OCI-LY7 (cell line): ENCODE measurements at regions of chr6 and their contacts with region 1.

Region 1: GRCh38 chr6:130447374-130447773 is 81.6 kb downstream of the TMEM200A start:
- DNase-seq: no peak
- H3K4me3 ChIP-seq: no peak overlapping the region
- H3K27ac ChIP-seq: no peak overlapping the region
- H3K4me1 ChIP-seq: no peaks in the 10 kb centered on the region
- CTCF ChIP-seq: no peak

Region 2: DNA sequence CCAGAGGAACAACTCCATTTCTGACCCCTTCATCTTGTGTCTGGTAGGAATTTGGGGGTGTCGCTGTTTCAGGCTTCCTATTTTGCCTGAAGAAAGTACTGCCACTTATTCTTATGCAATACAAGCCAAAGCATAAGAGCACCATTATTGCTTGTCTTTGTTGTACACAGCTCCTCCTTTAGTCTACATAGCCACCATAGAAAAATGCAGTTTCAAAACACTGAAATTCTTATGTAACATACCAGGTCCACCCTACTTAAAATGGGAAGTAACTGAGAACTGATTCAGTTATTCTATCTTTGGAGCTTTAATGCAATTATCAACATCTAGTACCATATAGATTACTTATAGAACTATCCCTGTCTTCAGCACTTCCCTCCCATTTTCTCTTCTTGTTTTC is 992.9 kb before region 1 on chr6:
- CTCF ChIA-PET with region 1: no interaction called
- POLR2A ChIA-PET with region 1: interaction called, 11 read pairs
- intact Hi-C with region 1: no loop called
- DNase-seq: no peak
- H3K4me3 ChIP-seq: no peak overlapping the region
- H3K27ac ChIP-seq: no peak overlapping the region
- H3K4me1 ChIP-seq: no peaks in the 10 kb centered on the region
- CTCF ChIP-seq: no peak

Region 3: GRCh38 chr6:130575971-130576370 is 128.6 kb after region 1 on chr6:
- CTCF ChIA-PET with region 1: no interaction called
- POLR2A ChIA-PET with region 1: no interaction called
- intact Hi-C with region 1: no loop called
- DNase-seq: no peak
- H3K4me3 ChIP-seq: no peak overlapping the region
- H3K27ac ChIP-seq: no peak overlapping the region
- H3K4me1 ChIP-seq: no peaks in the 10 kb centered on the region
- CTCF ChIP-seq: no peak